Calu3 (cell line): ENCODE measurements at regions of chr2 and their contacts with region 1.

Region 1: DNA sequence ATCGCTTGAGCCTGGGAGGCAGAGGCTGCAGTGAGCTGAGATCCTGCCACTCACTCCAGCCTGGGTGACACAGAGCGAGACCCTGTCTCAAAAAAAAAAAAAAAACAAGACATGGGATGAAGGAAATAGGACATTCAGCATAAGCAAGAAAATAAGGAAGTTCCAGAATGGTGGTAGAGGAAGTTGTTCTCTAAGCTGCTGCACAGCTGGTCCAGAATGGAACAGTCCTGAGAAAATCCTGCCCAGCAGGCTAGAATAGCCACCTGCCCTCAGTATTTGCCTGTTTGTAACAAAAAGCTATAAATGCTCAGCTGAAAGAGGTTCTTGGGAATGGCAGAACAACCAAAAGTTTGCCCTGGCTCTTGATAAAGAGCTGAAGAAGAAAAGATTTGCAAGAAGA is 11.1 kb upstream of the MAPRE3 start:
- DNase-seq: no peak
- H3K4me3 Mint-ChIP-seq: no peak overlapping the region
- H3K27ac Mint-ChIP-seq: no peak overlapping the region
- H3K4me1 Mint-ChIP-seq: peaks cover 17% of the 10 kb centered on the region
- H3K27me3 Mint-ChIP-seq: peaks cover 79% of the 10 kb centered on the region
- CTCF ChIP-seq: no peak

Region 2: DNA sequence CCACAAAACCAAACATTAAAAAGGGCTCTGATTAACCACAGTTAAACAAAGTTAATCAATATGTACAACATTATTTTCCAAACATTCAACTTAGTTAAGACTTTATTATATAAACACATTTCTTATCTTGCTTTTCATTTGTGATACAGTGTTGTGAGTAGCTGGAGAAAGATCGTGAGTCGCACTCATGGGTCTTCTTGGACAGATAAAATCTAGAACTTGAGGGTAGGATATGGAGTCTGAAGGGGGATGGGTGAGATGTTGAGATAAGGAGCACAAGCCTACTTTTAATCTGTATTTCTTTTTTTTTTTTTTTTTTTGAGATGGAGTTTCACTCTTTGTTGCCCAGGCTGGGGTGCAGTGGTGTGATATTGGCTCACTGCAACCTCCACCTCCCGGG is 50.8 kb after region 1 on chr2:
- CTCF ChIA-PET with region 1: interaction called, 144 read pairs
- intact Hi-C with region 1: no loop called
- DNase-seq: no peak
- H3K4me3 Mint-ChIP-seq: no peak overlapping the region
- H3K27ac Mint-ChIP-seq: peak overlapping the region; percentile 67
- H3K4me1 Mint-ChIP-seq: peaks cover 30% of the 10 kb centered on the region
- H3K27me3 Mint-ChIP-seq: no peaks in the 10 kb centered on the region
- CTCF ChIP-seq: no peak

Region 3: DNA sequence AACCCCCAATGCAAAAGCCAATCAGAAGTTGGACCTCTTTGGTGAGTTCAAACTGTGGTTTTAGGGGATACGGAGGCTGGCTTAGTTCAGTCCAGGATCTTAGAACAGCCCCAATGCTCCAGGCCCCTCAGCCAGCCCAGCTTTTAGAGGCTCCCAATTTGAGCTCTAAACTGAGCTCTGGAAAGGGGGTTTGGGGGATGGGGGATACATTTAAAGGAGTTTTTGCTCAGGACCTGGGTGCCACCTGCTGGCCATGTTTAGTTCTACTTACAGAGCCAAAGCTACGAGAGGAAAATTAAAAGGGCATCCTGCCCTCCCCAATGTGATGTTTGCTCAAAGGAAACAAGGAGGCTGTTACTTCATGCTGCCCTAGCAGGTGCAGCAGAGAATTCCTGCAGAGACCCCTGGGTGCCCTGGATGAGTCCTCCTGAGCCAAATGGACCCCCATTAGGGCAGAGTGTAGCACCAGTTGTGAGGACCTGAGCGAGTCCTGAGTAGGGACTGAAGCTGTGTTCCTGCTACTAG is 57.5 kb after region 1 on chr2:
- CTCF ChIA-PET with region 1: interaction called, 144 read pairs
- intact Hi-C with region 1: loop called (anchors 1 kb)
- DNase-seq: peak; percentile 70
- H3K4me3 Mint-ChIP-seq: no peak overlapping the region
- H3K27ac Mint-ChIP-seq: no peak overlapping the region
- H3K4me1 Mint-ChIP-seq: peaks cover 37% of the 10 kb centered on the region
- H3K27me3 Mint-ChIP-seq: no peaks in the 10 kb centered on the region
- CTCF ChIP-seq: peak; percentile 83

Region 4: DNA sequence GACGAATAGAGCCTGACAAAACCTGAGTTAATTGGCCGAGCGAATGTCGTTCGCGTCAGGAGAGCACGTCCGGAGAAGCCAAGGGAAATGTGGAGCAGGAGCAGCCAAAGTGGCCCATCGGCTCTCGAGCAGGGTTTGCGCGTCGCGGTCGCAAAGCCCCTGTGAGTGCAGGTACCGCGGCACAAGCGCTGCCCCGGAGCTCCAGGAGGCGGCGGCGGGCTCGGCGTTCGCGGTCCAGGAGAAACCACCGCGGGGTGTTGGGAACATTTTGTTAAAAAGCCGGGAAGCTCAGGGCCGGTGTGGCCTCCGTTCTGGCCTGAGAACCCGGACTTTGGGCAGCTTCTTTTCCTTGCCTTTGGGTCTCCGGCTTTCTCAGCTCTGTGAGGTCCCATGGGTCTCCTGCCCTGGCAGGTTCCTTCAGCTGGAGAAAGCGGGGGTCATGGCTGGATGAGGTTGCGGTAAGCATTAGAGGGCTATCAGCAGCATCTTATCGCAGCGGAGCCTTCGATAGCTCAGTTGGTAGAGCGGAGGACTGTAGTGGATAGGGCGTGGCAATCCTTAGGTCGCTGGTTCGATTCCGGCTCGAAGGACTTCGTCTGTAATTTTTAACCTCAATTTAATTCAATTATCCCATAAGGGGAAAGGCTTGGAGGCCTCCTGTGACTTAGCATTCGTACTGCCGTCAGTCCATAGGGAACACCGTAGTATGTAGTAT is 91.1 kb after region 1 on chr2:
- CTCF ChIA-PET with region 1: interaction called, 11 read pairs
- intact Hi-C with region 1: no loop called
- DNase-seq: peak; percentile 91
- H3K4me3 Mint-ChIP-seq: peak overlapping the region; percentile 91
- H3K27ac Mint-ChIP-seq: peak overlapping the region; percentile 99
- H3K4me1 Mint-ChIP-seq: peaks cover 20% of the 10 kb centered on the region
- H3K27me3 Mint-ChIP-seq: peaks cover 17% of the 10 kb centered on the region
- CTCF ChIP-seq: peak; percentile 40

Region 5: GRCh38 chr2:27086090-27086723 is 126.9 kb after region 1 on chr2:
- CTCF ChIA-PET with region 1: interaction called, 10 read pairs
- intact Hi-C with region 1: no loop called
- DNase-seq: peak; percentile 98
- H3K4me3 Mint-ChIP-seq: peak overlapping the region; percentile 82
- H3K27ac Mint-ChIP-seq: peak overlapping the region; percentile 44
- H3K4me1 Mint-ChIP-seq: peaks cover 12% of the 10 kb centered on the region
- H3K27me3 Mint-ChIP-seq: no peaks in the 10 kb centered on the region
- CTCF ChIP-seq: peak; percentile 93